Mucosa of descending colon (tissue), 3 donors: ENCODE measurements at regions of chr12 and their contacts with region 1.

Region 1: GRCh38 chr12:88993651-88994050 is 358.6 kb downstream of the DUSP6 start:
- DNase-seq: peak in 1 of 3 donors; percentile 21
- ATAC-seq: peak; percentile 39
- H3K4me3 ChIP-seq: no peak overlapping the region
- H3K4me1 ChIP-seq: no peaks in the 10 kb centered on the region
- CTCF ChIP-seq: no peak

Region 2: DNA sequence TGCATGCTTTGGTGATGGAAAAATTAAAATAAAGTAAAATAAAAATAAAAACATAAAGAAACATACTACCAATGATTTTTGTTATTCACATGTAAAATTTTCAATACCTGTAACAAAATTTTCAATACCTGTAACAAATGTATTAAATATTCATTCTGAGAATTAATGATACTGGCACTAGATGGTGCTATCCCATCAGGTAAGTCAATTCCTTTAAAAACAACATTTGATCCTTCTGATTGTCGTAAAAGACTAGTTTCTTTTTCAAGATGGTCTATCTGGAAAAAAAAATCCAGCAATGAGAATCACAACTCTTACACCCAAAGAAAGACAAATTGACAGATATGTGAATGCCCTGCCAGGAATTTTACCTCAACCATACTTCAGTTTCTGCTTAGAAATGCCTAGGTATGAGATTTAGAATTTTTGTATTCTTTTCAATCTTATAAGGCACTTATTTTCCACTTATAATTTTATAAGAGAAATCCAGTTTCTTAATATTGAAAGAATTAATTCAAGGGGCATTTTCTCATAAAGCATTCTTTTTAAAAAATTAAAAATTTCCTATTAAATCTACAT is 882.5 kb before region 1 on chr12:
- intact Hi-C with region 1: loop called in 1 of 2 experiments (anchors 5 kb)
- DNase-seq: peak in 1 of 3 donors; percentile 2
- ATAC-seq: no peak
- H3K4me3 ChIP-seq: no peak overlapping the region
- H3K4me1 ChIP-seq: no peaks in the 10 kb centered on the region
- CTCF ChIP-seq: no peak

Region 3: DNA sequence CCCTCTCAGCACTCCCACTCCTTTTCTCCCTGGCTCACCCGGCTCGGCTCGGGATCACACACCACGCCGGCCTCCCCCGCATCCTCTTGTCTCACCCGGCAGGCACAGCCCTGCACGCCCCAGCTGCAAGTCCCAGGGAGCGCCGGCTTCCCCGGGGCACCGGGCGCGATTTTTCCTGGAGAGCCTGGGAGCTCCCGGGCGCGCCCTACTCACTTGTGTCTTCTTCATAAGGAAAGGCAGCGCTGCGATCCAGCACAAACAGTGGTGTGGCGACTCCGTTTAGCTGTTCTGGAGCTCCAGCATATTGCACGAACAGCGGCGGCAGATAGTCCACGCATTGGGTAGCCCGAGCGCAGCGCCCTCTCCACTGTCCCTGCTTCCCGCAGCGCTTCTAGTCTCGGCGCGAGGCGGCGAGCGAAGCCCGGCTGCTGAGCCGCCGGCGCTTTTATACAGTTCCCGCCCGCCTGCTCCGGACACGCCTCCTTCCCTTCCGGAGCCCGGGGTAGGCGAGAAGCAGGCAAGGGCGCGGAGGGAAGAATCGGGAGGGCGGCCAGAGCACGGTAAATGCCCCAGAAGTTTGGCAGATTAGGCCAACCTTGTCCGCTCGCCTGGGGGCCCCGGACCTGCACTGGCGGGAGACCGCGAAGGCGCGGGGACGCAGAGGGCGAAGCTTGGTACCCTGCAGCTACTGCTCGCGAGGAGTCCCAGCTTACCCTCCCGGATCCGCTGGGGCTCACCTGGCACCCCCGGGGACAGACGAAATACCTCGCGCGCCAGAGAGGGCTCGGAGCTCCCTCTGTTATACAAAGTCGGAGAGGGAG is 413.4 kb before region 1 on chr12 and contains the start of gene KITLG:
- intact Hi-C with region 1: loop called in 1 of 2 experiments (anchors 5 kb)
- DNase-seq: peak; percentile 88 to 93 (median 90)
- ATAC-seq: peak; percentile 95
- H3K4me3 ChIP-seq: peak within 1 kb of the TSS; percentile 67
- H3K4me1 ChIP-seq: peaks cover 19% of the 10 kb centered on the region
- CTCF ChIP-seq: no peak
- total RNA-seq, gene KITLG: 28.5 to 96.2 (median 37.4) TPM

Region 4: DNA sequence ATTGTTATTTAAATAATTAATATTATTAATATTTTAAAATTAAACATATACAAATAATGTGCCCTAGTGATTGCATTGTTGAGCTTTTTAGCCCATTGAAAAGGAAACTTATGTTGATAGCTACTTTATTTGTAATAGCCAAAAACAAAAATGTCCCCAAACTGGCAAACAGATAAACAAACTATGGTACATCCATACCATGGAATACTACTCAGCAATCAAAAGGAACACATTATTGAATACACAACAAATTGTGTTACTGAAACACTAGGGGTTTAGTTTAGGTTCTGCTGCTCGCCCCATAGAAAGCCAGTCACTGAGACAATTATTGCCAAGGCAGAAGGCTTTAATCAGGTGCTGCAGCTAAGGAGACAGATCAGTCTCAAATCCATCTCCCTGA is 173.6 kb before region 1 on chr12:
- intact Hi-C with region 1: no loop called
- DNase-seq: no peak
- ATAC-seq: no peak
- H3K4me3 ChIP-seq: no peak overlapping the region
- H3K4me1 ChIP-seq: no peaks in the 10 kb centered on the region
- CTCF ChIP-seq: no peak